ENCODE measurements at regions of chr3 and their contacts with region 1.

Region 1: DNA sequence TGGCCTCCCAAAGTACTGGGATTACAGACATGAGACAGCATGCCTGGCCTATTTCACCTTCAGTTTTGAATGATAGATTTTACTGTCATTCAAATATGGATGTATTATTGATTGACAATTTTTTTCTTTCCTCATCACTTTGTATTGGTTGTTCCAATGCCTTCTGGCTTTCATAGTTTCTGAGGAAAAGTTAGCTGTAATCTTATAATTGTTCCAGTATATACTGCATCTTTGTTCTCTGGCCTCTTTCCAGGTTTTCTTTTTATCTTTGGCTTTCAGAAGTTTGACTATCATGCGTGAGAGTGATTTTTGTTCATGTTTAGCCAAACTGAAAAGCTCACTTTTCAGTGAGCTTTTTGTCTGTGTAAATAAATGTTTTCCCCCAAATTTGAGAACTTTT is 157.1 kb downstream of the RSRC1 start:
- DNase-seq: no peak
- ATAC-seq: no peak
- H3K4me3 ChIP-seq: no peak overlapping the region
- H3K4me3 Mint-ChIP-seq: no peak overlapping the region
- H3K27ac ChIP-seq: no peak overlapping the region
- H3K27ac Mint-ChIP-seq: no peak overlapping the region
- H3K4me1 ChIP-seq: no peaks in the 10 kb centered on the region
- H3K4me1 Mint-ChIP-seq: no peaks in the 10 kb centered on the region
- H3K27me3 ChIP-seq: no peaks in the 10 kb centered on the region
- H3K27me3 Mint-ChIP-seq: no peaks in the 10 kb centered on the region

Region 2: DNA sequence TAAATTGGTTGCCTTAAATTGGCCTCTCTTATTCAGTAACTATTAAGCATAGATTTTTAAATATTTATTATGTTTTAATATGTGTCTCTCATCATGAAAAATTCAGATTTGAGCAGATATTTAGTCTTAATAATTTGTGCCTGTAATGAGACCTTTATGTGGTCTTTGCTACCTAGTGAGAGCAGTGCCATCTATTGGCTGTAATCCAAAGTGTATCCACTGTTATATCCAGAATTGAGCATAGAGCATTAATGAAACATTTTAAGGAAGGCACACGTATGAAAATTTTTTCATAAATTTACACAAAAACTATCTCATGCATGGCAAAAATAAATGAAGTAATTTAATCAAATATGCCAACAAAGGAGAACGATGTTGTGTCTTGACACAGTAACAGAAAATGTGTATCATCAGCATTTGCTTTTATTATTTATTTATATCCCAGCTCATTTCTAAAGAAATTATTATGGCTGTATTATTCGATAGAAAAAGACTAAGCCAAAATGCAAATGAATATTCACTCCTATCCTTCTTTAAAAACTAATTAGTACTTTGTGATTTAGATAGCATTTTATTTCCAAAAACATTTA is 46.4 kb after region 1 on chr3:
- CTCF ChIA-PET with region 1: interaction called in 1 of 2 experiments, 13 read pairs
- POLR2A ChIA-PET with region 1: no interaction called
- DNase-seq: peak in 1 of 35 experiments; percentile 20
- ATAC-seq: no peak
- H3K4me3 ChIP-seq: no peak overlapping the region
- H3K4me3 Mint-ChIP-seq: no peak overlapping the region
- H3K27ac ChIP-seq: no peak overlapping the region
- H3K27ac Mint-ChIP-seq: no peak overlapping the region
- H3K4me1 ChIP-seq: no peaks in the 10 kb centered on the region
- H3K4me1 Mint-ChIP-seq: no peaks in the 10 kb centered on the region
- H3K27me3 ChIP-seq: no peaks in the 10 kb centered on the region
- H3K27me3 Mint-ChIP-seq: no peaks in the 10 kb centered on the region